ENCODE measurements at regions of chr9 and their contacts with region 1.

Region 1: GRCh38 chr9:22105005-22105722 is 96.1 kb upstream of the CDKN2B start:
- DNase-seq: peak; percentile 19
- H3K4me3 Mint-ChIP-seq: no peak overlapping the region
- H3K27ac Mint-ChIP-seq: peak overlapping the region; percentile 11
- H3K4me1 Mint-ChIP-seq: peaks cover 57% of the 10 kb centered on the region
- H3K27me3 Mint-ChIP-seq: peaks cover 39% of the 10 kb centered on the region

Region 2: GRCh38 chr9:21357479-21358460 is 747.4 kb before region 1 on chr9:
- intact Hi-C with region 1: loop called (anchors 5 kb)
- DNase-seq: no peak
- H3K4me3 Mint-ChIP-seq: peak overlapping the region; percentile 56
- H3K27ac Mint-ChIP-seq: peak overlapping the region; percentile 81
- H3K4me1 Mint-ChIP-seq: peaks cover 23% of the 10 kb centered on the region
- H3K27me3 Mint-ChIP-seq: peaks cover 9% of the 10 kb centered on the region

Region 3: DNA sequence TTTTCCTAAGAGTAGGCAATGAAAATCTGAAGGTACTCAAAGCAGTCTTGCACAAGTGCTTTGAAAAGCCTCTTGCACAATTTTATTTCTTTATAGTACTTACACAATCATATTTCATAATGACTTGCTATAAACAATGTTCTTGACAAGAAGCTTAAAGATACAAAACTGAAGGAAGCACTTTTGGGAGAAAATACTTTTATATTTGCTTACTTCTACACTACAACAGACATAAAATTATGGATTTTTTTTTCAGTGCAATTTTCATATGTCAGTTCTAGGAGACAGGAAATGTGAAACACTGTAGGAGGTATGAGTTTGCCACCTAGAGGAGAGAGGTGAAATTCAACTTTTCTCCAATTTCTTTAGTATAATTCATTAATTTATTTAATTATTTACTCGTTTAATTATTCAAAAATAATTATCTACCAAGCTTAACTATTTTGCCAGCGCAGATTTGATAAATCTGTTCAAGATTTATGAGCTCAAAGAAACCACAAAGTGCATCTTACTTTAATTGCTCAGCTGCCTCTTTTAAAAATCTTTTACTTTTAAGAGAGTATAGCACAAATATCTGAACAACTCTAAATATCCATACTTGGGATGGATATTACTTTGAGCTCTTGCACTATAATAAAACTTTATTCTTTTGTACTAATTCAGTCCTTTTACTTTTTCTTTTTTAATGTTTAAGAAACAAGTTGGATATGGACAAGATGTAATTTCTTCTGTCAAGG is 67.0 kb before region 1 on chr9:
- intact Hi-C with region 1: loop called (anchors 2 kb)
- DNase-seq: no peak
- H3K4me3 Mint-ChIP-seq: no peak overlapping the region
- H3K27ac Mint-ChIP-seq: no peak overlapping the region
- H3K4me1 Mint-ChIP-seq: peaks cover 46% of the 10 kb centered on the region
- H3K27me3 Mint-ChIP-seq: peaks cover 26% of the 10 kb centered on the region

Region 4: DNA sequence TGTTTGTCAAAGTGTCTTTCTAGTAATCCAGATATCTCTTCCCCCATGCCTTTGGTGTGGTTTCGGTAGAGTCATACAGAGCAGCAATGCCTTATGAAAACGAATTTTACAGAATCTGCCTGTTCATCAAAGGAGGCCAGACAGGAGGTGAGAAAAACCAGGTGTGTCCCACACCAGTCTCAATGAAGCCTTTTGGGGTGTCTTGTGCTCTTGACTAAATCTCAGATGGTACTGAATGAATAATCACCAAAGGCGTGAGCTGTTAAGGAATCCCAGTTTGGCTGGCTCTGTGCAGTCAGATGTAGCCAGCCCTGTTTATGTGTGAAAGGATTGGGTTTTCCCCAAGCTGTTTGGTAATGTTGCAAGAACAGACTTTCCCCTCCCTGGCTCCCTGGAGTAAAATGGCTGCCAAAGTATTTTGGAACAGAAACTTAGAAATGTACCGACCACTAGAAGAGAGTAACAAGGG is 25.3 kb before region 1 on chr9:
- intact Hi-C with region 1: loop called (anchors 1 kb)
- DNase-seq: peak; percentile 58
- H3K4me3 Mint-ChIP-seq: peak overlapping the region; percentile 34
- H3K27ac Mint-ChIP-seq: peak overlapping the region; percentile 46
- H3K4me1 Mint-ChIP-seq: peaks cover 52% of the 10 kb centered on the region
- H3K27me3 Mint-ChIP-seq: peaks cover 36% of the 10 kb centered on the region

Region 5: DNA sequence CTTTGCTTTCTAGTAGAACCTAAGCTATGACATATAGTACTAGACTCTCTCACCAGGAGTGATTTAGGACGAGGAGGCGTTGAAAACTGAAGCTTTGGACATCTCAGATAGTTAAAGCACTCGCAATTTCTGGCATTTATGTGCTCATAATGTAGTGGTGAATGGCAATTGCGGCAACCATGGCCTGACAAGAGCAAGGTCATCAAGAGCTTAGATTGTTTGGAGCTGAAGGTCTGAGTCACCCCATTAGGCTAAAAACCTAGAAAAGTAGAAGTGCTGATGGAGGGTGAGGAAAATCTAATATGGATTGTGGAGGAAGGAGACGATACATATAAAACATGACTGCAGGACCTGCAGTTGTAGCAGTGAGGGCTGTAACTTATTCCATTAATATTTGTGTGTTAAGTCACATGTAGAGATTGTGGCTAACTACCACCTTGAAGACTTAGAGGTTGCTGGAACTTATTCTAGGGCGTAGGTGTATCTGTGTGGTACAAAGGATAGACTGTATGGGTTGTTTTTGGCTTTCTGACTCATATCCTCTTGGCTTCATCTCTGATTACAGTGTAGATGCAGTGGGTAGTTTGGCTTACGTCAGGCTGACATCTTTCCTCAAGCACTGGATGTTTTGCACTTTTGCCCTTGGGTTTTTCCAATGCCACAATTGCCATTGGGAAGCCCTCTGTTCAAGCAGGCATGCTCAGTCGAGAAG is 42.8 kb after region 1 on chr9:
- intact Hi-C with region 1: loop called (anchors 1 kb)
- DNase-seq: peak; percentile 14
- H3K4me3 Mint-ChIP-seq: no peak overlapping the region
- H3K27ac Mint-ChIP-seq: peak overlapping the region; percentile 4
- H3K4me1 Mint-ChIP-seq: peaks cover 36% of the 10 kb centered on the region
- H3K27me3 Mint-ChIP-seq: peaks cover 26% of the 10 kb centered on the region

Region 6: DNA sequence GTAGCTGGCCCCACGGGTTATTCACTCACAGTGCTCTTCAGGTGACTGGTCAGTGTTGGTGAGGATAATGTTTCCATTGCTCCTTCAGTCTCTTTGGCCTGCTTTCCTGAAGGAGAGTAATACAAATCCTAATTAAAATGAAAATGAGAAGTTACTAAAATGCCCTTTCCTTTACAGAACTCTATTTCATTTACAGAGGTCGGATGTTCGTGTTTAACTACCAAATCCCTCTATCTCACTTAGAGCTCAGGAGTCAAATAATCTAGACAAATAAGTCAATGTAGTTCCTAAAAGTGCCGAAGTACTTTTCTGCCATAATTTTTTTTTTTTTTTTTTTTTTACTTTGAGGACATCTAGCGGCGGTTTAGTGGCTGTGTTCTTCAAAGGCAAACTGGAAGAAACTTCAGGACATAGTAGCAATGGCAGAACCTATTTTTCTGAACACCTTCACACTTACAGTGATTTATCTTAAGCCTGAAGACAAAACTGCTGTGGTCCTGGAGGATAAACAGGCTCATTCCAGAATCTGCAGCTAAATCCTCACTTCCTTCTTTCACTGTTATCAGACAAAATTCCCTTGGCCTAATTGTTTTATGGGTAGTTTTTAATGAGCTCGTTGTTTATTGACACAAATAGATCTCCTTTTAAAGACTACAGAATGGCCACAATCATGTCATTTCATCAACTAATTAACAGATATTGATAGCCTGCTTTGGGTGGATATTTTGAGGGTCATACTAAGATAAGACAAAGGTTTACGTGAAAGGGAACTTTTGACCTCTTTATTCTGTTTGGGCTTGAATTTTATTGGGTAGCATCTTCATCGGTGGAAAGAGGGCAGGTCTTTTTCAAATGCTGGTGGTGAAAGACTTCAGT is 133.9 kb after region 1 on chr9:
- intact Hi-C with region 1: loop called (anchors 1 kb)
- DNase-seq: no peak
- H3K4me3 Mint-ChIP-seq: no peak overlapping the region
- H3K27ac Mint-ChIP-seq: no peak overlapping the region
- H3K4me1 Mint-ChIP-seq: peaks cover 52% of the 10 kb centered on the region
- H3K27me3 Mint-ChIP-seq: peaks cover 41% of the 10 kb centered on the region